ENCODE measurements at regions of chr20 and their contacts with region 1.

Region 1: DNA sequence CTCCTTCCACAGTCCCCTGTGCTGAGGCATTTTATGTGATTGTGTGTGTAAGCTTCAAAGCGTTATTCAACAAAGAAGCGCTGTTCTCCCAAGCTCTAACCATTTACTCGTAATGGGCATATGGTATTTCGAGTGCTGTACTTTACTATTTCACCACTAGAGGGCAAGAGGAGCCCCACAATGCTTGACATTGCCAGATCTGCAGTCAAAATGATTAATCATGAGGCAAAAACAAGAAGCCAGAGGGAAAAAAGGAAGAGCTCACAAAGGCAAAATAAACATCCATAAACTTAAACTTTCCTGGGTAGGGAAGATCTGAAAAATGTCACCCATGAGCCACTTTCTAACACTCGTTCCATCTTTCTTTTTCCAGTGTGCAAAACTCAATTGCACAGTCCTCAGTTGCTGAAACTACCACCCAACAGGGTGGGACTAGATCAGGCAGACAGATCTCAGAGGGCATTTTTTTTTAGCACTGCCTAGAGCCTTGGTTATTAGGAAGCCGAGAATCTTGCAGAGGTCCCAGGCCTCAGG is 215.0 kb upstream of the PLCB4 start:
- DNase-seq: peak in 1 of 2 donors; percentile 48
- ATAC-seq: peak; percentile 81 to 91 (median 84)
- H3K4me3 ChIP-seq: peak overlapping the region in 6 of 10 donors; percentile 4 to 37 (median 18)
- H3K27ac ChIP-seq: peak overlapping the region; percentile 7 to 77 (median 60)
- H3K4me1 ChIP-seq: peaks cover 0 to 34% (median 20%) of the 10 kb centered on the region in 9 donors
- H3K27me3 ChIP-seq: no peaks in the 10 kb centered on the region
- CTCF ChIP-seq: peak; percentile 83 to 93 (median 90)

Region 2: GRCh38 chr20:8766868-8767390 is 86.9 kb before region 1 on chr20:
- intact Hi-C with region 1: no loop called
- DNase-seq: no peak
- ATAC-seq: no peak
- H3K4me3 ChIP-seq: no peak overlapping the region
- H3K27ac ChIP-seq: no peak overlapping the region
- H3K4me1 ChIP-seq: no peaks in the 10 kb centered on the region
- H3K27me3 ChIP-seq: no peaks in the 10 kb centered on the region
- CTCF ChIP-seq: no peak

Region 3: DNA sequence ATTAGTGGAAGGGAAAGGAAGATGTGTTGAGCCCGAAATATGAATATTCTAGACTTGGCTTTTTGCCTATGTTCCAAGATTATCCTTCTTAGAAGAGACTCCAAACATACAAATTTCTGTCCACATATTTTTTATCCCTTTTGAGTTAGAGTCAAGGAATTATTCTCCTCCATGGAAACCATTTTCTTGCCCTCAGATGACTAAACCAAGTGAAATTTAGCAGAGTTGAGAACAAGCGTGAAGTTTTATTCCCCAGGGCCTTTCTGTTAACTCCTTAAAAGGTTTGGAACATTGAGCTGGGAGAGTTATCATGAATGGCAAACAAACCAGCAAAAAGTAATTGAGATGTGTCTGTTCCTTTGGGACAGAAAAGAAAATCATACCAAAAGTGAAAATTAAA is 71.1 kb before region 1 on chr20:
- intact Hi-C with region 1: loop called in 2 of 10 experiments (anchors 5 kb)
- DNase-seq: no peak
- ATAC-seq: peak in 2 of 8 donors; percentile 35 to 38
- H3K4me3 ChIP-seq: no peak overlapping the region
- H3K27ac ChIP-seq: peak overlapping the region in 1 of 10 donors; percentile 35
- H3K4me1 ChIP-seq: peaks cover 0 to 9% (median 0%) of the 10 kb centered on the region in 9 donors
- H3K27me3 ChIP-seq: no peaks in the 10 kb centered on the region
- CTCF ChIP-seq: no peak

Region 4: DNA sequence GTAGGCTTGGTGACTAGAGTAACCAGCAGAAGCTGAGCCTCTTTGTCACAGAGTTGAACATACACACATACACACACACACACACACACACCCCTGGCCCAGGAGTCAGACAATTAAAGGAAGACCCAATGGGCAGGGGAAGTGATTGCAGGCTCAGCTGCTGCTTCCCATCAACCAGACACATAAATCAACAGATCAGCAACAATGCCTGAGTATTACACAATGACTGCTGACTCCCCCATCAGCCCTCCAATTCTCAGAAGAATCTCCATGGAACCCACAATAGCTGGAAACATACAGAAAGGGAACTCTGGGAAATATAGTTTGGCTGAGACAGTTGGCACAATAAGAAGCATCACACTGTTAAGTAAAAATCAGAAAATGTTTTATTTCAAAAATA is 55.4 kb before region 1 on chr20:
- intact Hi-C with region 1: loop called in 2 of 10 experiments (anchors 5 to 10 kb)
- DNase-seq: peak in 1 of 2 donors; percentile 8
- ATAC-seq: peak in 5 of 8 donors; percentile 34 to 78 (median 44)
- H3K4me3 ChIP-seq: no peak overlapping the region
- H3K27ac ChIP-seq: peak overlapping the region in 1 of 10 donors; percentile 16
- H3K4me1 ChIP-seq: peaks cover 0 to 39% (median 15%) of the 10 kb centered on the region in 9 donors
- H3K27me3 ChIP-seq: no peaks in the 10 kb centered on the region
- CTCF ChIP-seq: no peak

Region 5: DNA sequence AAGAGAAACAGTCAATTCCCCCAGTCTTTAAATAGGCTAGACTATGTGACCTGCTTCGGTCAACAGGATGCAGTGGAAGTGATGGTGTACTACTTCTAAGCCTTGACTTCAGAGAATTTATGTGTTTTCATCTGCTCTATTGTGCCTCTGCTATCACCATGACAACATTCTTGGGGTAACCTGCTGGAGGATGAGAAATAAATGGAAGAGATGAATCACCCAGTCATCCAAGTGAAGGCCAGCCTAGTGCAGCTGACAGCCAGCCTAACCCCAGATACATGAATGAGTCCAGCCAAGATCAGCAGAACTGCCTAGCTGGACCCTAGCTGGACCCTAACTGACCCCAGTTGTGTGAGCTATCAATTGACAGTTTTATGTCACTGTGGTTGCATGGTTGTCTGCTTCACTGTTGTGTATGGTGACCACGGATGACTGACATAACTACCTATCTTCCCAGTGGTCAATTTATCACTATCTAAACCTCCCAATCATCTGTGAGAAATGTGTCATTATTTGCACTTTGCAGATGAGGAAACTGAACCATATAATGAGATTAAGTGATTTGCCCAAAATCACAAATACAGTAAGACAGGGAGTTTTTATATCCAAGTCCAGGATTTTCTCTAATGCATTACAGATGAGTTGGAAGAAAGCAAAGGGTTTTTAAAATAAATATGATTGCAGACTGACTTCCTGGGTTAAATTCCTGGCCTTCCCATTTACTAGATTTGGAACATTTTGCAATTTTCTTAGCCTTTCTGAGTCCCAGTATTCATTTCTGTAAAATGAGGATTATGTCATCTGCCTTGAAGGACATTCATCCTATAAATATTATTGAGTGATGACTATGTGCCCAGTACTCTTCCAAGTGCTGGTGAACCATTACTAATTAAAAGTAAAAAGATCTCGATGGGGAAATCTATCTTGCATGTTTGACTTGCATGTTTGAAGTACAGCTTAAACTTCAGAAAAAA is 78.6 kb after region 1 on chr20:
- intact Hi-C with region 1: loop called in 3 of 10 experiments (anchors 1 to 10 kb)
- DNase-seq: peak in 1 of 2 donors; percentile 12
- ATAC-seq: peak in 7 of 8 donors; percentile 15 to 65 (median 46)
- H3K4me3 ChIP-seq: no peak overlapping the region
- H3K27ac ChIP-seq: peak overlapping the region in 8 of 10 donors; percentile 4 to 71 (median 50)
- H3K4me1 ChIP-seq: peaks cover 0 to 30% (median 8%) of the 10 kb centered on the region in 9 donors
- H3K27me3 ChIP-seq: no peaks in the 10 kb centered on the region
- CTCF ChIP-seq: no peak

Region 6: DNA sequence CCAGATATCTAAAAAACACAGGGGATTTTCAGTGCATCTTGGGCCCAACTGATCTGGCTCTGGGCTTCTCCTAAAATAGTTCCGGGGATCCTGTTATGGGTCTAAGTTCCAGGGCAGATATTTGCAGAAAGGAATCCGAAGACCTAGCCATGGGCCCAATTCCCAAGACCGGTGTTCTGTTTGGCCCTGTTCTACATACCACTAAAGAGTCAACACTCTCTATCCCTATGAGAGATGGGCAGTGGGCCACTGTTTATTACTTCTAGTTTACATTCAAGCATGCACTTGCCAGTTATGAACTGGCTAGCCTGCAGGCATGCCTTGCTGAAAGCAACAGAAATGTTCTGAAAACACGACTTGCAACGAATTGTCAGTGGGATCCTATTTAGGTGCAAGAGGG is 127.6 kb after region 1 on chr20:
- intact Hi-C with region 1: no loop called
- DNase-seq: no peak
- ATAC-seq: no peak
- H3K4me3 ChIP-seq: no peak overlapping the region
- H3K27ac ChIP-seq: no peak overlapping the region
- H3K4me1 ChIP-seq: no peaks in the 10 kb centered on the region
- H3K27me3 ChIP-seq: no peaks in the 10 kb centered on the region
- CTCF ChIP-seq: no peak

Region 7: DNA sequence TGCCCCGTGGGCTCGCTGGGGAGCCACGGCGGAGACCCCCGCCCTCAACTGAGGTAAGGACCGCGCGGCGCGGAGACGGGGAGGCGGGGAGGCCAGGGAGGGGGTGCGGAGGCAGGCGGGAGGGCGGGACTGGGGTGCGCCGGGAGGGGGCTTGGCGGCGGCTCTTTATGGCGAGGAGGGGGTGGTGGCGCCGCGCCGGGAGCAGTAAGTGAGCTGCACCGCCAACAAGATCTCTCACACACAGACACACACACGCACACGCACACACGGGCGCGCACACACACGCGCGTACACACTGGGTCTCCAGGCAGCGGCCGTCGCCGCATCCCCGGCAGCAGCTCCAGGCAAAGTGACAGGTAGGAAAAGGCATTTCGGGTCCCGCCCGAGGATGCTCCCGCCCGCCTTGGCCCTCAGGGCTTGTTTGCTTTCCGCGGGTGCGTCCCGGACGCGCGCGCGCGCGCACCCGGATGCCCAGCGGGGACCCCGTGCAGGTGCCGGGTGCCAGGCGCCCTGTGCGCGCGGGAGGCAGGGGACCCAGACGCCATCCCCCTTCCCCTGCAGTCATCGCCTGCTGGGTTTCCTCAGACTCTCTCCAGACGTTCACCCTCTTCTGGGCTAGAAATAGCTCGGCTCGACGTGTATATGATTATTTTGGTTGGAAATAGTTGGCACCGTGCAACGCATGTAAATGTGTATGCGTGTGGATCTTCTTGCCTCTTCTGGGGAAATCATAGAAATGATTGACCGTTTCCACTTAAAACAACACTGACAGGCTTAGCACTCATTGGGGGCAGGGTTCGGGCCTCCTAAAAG is 215.2 kb after region 1 on chr20 and contains the start of gene PLCB4:
- intact Hi-C with region 1: loop called in 6 of 10 experiments (anchors 2 to 10 kb)
- DNase-seq: peak; percentile 51 to 52
- ATAC-seq: peak; percentile 18 to 69 (median 48)
- H3K4me3 ChIP-seq: peak within 1 kb of the TSS; percentile 70 to 97 (median 91)
- H3K27ac ChIP-seq: peak within 1 kb of the TSS; percentile 80 to 99 (median 94)
- H3K4me1 ChIP-seq: peaks cover 2 to 55% (median 38%) of the 10 kb centered on the region in 9 donors
- H3K27me3 ChIP-seq: peaks cover 0 to 25% (median 0%) of the 10 kb centered on the region in 7 donors
- CTCF ChIP-seq: no peak
- total RNA-seq, gene PLCB4: 16.2 to 33.3 (median 29.4) TPM

Region 8: DNA sequence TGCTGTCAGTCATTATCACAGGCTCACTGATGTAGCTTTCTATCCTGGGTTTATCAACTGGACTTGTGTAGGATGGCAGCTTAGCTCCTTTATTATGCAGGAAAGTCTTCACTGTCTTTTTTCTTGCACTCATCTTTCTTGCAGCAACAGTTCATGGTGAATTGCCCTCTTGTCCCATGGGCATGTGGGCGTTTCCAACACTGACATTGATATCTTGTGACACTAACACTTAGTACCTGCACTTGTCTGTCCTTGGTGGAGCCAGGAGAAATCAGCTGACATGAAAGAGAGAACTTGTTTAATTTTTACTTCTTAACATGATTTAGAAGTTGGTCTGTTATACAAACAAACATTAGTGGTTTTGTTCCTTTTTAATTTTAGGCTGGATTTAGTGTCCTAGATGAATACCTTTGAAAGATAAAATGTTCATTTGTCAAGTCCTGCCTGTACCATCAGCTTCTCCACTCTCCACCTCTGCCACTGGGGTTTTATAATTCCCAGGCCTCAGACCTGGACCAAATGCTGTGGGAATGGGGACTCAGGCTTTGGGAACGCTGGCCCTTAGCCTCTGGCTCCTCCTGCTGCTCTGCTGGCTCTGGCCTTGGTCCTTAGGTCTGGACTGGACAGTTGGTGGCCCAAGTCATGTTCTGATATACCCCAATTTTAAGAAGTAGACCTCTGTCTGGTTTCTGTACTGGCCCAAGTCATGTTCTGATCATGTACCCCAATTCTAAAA is 499.5 kb after region 1 on chr20:
- intact Hi-C with region 1: loop called in 6 of 10 experiments (anchors 2 to 10 kb)
- DNase-seq: no peak
- ATAC-seq: peak in 5 of 8 donors; percentile 42 to 73 (median 68)
- H3K4me3 ChIP-seq: no peak overlapping the region
- H3K27ac ChIP-seq: peak overlapping the region in 5 of 10 donors; percentile 10 to 37 (median 28)
- H3K4me1 ChIP-seq: peaks cover 5 to 41% (median 33%) of the 10 kb centered on the region in 9 donors
- H3K27me3 ChIP-seq: no peaks in the 10 kb centered on the region
- CTCF ChIP-seq: peak in 6 of 9 donors; percentile 15 to 44 (median 28)

Region 9: DNA sequence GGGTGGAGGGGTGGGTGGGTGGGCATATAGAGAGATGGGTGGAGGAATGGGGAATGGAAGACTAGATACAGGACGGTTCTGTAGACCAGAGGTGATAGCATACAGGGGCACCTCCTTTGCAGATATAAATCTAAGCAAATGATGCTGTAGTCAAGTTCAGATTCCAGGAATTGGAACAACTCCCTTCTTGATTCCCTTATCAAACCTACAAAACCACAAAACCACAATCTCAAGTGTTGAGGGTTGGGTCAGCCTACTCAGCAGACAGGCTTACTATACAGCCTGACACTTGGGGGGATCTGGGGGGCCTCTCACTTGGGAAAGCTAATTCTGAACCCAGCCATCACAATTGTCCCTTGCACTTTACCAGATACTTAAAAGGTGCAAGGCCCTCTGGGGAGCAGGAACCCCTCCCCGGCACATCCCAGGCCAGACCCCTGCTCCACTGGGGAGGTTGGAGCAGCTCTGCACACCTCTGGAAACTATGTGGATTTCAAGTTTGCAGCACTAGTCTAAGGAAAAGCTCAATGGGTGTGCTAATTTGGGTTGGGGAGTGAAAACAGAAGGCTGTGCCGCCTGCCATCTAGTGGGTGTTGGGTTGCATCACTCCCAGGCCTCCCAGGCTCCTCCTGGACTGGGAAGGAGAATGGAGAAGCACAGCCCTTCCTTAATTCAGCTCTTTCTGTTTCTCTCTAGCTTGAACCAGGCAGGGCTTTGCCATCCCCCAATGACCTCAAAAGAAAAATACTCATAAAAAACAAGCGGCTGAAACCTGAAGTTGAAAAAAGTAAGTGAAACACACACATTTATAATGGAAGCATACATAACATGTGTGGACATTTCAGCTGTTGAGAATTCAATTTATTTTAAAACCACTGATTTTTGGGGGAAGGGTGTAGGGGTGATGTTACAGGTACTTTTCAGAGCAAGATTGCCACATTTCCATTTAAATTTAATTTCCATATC is 539.3 kb after region 1 on chr20:
- intact Hi-C with region 1: loop called in 1 of 10 experiments (anchors 5 kb)
- DNase-seq: peak; percentile 56 to 62
- ATAC-seq: peak; percentile 80 to 93 (median 90)
- H3K4me3 ChIP-seq: no peak overlapping the region
- H3K27ac ChIP-seq: no peak overlapping the region
- H3K4me1 ChIP-seq: peaks cover 0 to 24% (median 7%) of the 10 kb centered on the region in 9 donors
- H3K27me3 ChIP-seq: no peaks in the 10 kb centered on the region
- CTCF ChIP-seq: peak; percentile 49 to 84 (median 73)

Measured in heart right ventricle (tissue), 16 donors.